ENCODE measurements at regions of chr12 and their contacts with region 1.

Region 1: DNA sequence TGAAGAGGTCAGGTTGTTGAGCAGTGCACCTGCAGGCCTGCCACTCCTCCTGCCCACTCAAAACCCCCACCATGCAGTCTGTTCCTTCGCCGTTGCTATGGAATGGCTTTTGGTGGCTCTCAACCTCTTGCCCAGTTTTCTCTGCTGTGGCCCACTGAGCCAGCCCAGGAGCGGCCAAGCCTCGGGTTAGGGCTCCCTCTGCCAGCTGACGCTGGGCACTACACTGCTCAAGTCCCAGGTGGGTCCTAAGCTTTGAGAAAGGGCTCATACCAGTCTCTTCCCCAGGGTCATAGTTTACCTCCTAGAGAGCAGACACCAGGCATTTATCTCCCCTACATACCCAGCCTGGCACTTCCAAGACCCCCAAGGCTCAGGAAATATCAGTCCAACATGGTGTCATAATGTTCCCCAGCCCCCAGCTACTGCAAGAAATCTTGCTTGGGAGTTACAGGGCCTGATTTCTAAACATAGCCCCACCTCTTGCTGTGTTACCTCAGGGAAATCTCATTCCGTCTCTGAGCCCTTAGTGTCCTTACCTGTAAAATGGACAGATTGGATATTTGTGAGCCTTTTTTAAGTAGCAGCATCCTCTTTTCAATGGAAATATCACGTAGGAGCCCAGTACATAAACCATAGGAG is 59.4 kb downstream of the TSPAN11 start:
- DNase-seq: peak in 3 of 5 donors; percentile 39 to 70 (median 42)
- ATAC-seq: peak; percentile 44 to 80 (median 68)
- H3K4me3 ChIP-seq: no peak overlapping the region
- H3K27ac ChIP-seq: no peak overlapping the region
- H3K4me1 ChIP-seq: peaks cover 0 to 11% (median 1%) of the 10 kb centered on the region in 12 donors
- H3K27me3 ChIP-seq: no peaks in the 10 kb centered on the region
- CTCF ChIP-seq: peak; percentile 42 to 75 (median 62)
- POLR2A ChIP-seq: no peak

Region 2: GRCh38 chr12:30853561-30854133 is 132.3 kb before region 1 on chr12:
- intact Hi-C with region 1: loop called in 9 of 10 experiments (anchors 2 to 5 kb)
- DNase-seq: no peak
- ATAC-seq: no peak
- H3K4me3 ChIP-seq: no peak overlapping the region
- H3K27ac ChIP-seq: no peak overlapping the region
- H3K4me1 ChIP-seq: peaks cover 0 to 8% (median 0%) of the 10 kb centered on the region in 12 donors
- H3K27me3 ChIP-seq: no peaks in the 10 kb centered on the region
- CTCF ChIP-seq: no peak
- POLR2A ChIP-seq: no peak

Region 3: GRCh38 chr12:31035967-31036665 is 50.2 kb after region 1 on chr12:
- intact Hi-C with region 1: loop called in 1 of 10 experiments (anchors 10 kb)
- DNase-seq: no peak
- ATAC-seq: no peak
- H3K4me3 ChIP-seq: no peak overlapping the region
- H3K27ac ChIP-seq: no peak overlapping the region
- H3K4me1 ChIP-seq: peaks cover 0 to 21% (median 0%) of the 10 kb centered on the region in 12 donors
- H3K27me3 ChIP-seq: no peaks in the 10 kb centered on the region
- CTCF ChIP-seq: no peak
- POLR2A ChIP-seq: no peak

Region 4: GRCh38 chr12:31238764-31239387 is 252.9 kb after region 1 on chr12:
- intact Hi-C with region 1: loop called in 1 of 10 experiments (anchors 10 kb)
- DNase-seq: peak in 4 of 5 donors; percentile 44 to 65 (median 56)
- ATAC-seq: peak in 3 of 4 donors; percentile 69 to 83 (median 72)
- H3K4me3 ChIP-seq: no peak overlapping the region
- H3K27ac ChIP-seq: no peak overlapping the region
- H3K4me1 ChIP-seq: peaks cover 0 to 4% (median 0%) of the 10 kb centered on the region in 12 donors
- H3K27me3 ChIP-seq: peaks cover 0 to 34% (median 11%) of the 10 kb centered on the region in 9 donors
- CTCF ChIP-seq: peak; percentile 51 to 79 (median 62)
- POLR2A ChIP-seq: no peak